ENCODE measurements at regions of chr9 and their contacts with region 1.

Region 1: DNA sequence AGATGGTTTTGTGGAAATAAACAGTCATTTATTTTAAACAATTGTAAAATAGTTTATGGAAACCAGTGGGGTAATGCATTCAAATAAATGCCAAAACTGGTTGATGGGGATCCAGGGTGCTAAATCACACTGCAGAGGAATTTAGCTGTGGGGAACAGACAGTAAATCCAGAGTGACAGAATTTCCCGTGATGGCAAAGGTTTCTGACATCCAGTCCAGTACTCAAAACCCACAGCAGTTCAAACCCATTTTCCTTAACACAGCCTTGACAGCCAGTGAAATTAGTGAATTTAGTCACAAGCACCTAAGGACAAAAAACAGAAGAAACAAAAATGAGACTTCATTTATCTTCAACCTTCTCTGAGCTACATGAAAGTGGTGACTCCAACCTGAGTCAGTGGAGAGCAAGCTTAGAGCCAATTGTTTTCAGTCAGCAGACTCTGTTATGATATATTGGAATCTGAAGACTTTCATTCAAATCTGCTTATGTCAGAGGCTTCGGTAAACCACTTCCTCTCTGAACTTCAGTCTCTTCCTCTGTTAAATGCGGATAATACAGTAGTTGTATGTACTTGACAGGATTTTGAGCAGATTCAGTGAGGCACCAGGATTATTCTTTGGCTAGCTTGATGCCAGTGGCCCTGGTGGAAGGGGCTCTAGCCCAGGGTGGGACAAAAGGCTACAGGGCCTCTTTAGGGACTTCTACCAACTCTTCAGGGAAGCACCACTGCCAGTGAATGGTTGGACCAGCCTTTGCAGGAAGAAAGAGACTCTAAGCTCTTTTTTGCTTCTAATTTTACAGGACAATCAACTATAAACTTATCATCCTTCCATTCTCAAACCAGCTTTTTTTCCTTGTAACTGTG is 185.3 kb downstream of the MAPKAP1 start:
- DNase-seq: peak; percentile 71
- H3K4me3 Mint-ChIP-seq: peak overlapping the region; percentile 23
- H3K27ac Mint-ChIP-seq: peak overlapping the region; percentile 86
- H3K4me1 Mint-ChIP-seq: peaks cover 46% of the 10 kb centered on the region
- H3K27me3 Mint-ChIP-seq: no peaks in the 10 kb centered on the region

Region 2: DNA sequence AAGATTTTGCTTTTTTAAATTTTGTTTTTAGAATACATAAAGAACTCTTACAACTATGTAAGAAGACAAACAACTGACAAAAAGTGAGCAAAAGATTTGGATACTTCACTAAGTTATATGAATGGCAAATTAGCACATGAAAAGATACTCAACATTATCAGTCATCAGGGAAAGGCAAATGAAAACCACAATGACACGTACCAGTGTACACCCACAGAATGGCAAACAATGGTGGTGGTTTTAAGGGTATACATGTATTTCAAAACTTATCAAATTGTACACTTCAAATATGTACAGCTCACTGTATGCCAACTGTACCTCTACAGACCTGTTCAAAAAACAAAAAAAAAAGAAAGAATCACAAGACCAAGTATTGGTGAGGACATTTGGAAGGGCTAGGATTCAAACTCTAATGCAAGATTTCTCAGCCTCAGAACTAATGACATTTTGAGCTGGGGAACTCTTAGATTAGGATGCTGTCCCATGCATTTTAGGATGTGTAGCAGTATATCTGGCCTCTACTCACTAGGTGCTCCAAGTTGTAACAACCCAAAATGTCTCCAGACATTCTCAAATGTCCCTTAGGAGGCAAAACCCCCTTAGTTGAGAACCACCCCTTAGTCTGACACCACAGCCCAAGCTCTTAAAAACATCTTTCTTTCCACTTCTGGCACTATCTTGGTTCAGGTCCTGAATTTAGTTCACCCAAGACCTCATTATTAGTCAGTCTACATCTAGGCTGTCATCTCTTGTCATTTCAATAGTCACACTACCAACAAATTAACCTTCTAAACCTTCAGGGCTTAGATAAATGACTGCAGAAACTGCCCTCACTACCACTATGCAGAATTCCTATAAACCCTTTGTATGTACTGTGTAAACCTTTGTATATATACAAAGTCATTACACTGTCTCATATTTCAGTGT is 388.0 kb before region 1 on chr9:
- CTCF ChIA-PET with region 1: no interaction called
- intact Hi-C with region 1: loop called (anchors 1 kb)
- DNase-seq: peak; percentile 38
- H3K4me3 Mint-ChIP-seq: peak overlapping the region; percentile 39
- H3K27ac Mint-ChIP-seq: peak overlapping the region; percentile 92
- H3K4me1 Mint-ChIP-seq: peaks cover 34% of the 10 kb centered on the region
- H3K27me3 Mint-ChIP-seq: no peaks in the 10 kb centered on the region

Region 3: DNA sequence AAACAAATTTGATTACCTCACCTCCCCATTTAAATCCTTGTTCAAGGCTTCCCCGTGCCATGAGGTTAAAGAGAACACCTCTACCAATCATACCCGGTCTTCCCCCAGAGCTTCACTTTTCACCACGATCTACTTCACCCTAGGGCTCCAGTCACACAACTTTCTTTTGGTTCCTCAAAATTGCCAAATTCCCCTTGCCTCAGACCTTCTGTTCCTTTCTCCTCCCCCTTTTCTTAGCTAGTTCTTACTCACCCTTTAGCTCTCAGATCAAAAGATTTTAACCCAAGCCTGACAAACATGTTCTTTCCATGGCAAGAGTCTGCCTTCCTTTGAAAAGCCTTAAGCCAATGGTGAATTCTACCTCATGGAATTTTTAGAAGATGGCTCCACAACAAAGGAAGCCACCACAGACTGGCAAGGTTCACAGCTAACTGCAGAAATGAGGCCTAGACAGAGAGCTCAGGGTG is 128.6 kb after region 1 on chr9:
- CTCF ChIA-PET with region 1: no interaction called
- intact Hi-C with region 1: loop called (anchors 1 kb)
- DNase-seq: peak; percentile 60
- H3K4me3 Mint-ChIP-seq: peak overlapping the region; percentile 14
- H3K27ac Mint-ChIP-seq: peak overlapping the region; percentile 51
- H3K4me1 Mint-ChIP-seq: peaks cover 81% of the 10 kb centered on the region
- H3K27me3 Mint-ChIP-seq: no peaks in the 10 kb centered on the region

Region 4: DNA sequence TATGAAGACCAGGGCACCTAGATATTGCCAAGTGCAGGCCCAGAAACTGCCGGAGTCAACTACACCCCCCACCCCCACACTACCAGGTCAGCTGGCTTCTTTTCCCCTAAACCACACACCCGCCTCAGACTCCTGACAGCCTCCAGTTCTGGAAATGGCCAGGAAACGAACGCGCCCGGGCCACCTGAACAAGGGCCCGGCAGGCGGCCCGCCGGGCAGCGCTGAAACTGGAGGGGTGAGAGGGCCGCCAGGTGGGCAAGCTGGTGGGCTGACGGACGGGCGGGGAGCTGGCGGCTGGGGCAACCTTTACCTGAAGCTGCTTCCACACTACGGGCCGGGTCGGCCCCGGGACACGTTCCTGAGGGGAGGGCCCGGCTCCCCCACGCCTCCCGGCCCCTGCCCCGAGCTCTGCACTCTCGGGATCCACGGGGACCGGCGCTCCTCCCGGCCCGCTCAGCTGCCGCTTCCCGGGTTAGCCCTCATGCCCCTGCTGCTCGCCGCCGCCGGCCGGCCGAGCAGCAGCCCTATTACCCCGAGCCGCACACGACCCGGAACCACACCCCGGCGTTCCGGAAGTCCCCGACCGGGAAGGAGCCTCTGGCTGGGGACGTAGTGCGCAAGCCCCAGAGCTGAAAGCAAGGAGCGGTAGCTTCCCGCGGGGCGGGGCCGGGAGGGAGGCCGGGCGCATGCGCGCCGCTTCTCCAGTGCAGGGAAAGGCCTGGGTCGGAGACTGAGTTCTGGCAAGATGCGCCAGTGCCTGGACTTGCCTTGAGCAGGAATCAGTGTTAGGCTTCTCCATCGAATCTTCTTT is 185.2 kb after region 1 on chr9 and contains the start of gene MAPKAP1:
- CTCF ChIA-PET with region 1: interaction called, 3 read pairs
- intact Hi-C with region 1: loop called (anchors 1 kb)
- DNase-seq: peak; percentile 96
- H3K4me3 Mint-ChIP-seq: peak within 1 kb of the TSS; percentile 83
- H3K27ac Mint-ChIP-seq: peak within 1 kb of the TSS; percentile 87
- H3K4me1 Mint-ChIP-seq: peaks cover 38% of the 10 kb centered on the region
- H3K27me3 Mint-ChIP-seq: no peaks in the 10 kb centered on the region
- total RNA-seq, gene MAPKAP1: 54.8 to 57.4 TPM

Region 5: GRCh38 chr9:125829743-125830142 is 308.0 kb after region 1 on chr9:
- CTCF ChIA-PET with region 1: no interaction called
- intact Hi-C with region 1: loop called (anchors 2 kb)
- DNase-seq: peak; percentile 73
- H3K4me3 Mint-ChIP-seq: peak overlapping the region; percentile 77
- H3K27ac Mint-ChIP-seq: peak overlapping the region; percentile 84
- H3K4me1 Mint-ChIP-seq: peaks cover 29% of the 10 kb centered on the region
- H3K27me3 Mint-ChIP-seq: no peaks in the 10 kb centered on the region

Region 6: DNA sequence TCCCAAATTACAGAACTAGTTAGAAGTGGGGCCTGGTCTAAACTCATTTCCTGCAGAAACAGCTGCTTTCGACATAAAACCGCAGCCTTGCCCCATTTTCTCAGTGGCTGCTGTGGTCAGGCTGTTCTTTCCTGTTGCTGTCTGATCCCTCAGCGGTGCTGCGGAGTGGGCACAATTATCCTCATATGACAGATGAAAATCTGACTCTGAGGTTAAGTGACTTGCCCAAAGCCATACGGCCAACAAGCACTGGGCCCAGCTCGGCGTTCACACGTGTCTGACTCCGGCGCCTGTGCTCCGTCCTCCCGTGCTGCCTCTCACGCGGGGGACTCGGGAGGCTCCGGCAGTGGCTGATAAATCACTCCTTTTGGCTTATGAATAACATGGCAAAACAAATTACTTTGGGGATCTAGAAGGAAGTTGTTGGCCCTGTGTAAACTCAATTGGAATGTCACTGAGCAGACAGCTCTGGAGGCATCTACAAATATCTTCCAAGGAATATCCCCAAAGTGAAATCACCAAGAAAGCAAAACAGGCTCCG is 949.5 kb after region 1 on chr9:
- CTCF ChIA-PET with region 1: no interaction called
- intact Hi-C with region 1: loop called (anchors 5 kb)
- DNase-seq: peak; percentile 92
- H3K4me3 Mint-ChIP-seq: peak overlapping the region; percentile 33
- H3K27ac Mint-ChIP-seq: peak overlapping the region; percentile 20
- H3K4me1 Mint-ChIP-seq: peaks cover 46% of the 10 kb centered on the region
- H3K27me3 Mint-ChIP-seq: no peaks in the 10 kb centered on the region